ENCODE measurements at regions of chr1 and their contacts with region 1.

Region 1: DNA sequence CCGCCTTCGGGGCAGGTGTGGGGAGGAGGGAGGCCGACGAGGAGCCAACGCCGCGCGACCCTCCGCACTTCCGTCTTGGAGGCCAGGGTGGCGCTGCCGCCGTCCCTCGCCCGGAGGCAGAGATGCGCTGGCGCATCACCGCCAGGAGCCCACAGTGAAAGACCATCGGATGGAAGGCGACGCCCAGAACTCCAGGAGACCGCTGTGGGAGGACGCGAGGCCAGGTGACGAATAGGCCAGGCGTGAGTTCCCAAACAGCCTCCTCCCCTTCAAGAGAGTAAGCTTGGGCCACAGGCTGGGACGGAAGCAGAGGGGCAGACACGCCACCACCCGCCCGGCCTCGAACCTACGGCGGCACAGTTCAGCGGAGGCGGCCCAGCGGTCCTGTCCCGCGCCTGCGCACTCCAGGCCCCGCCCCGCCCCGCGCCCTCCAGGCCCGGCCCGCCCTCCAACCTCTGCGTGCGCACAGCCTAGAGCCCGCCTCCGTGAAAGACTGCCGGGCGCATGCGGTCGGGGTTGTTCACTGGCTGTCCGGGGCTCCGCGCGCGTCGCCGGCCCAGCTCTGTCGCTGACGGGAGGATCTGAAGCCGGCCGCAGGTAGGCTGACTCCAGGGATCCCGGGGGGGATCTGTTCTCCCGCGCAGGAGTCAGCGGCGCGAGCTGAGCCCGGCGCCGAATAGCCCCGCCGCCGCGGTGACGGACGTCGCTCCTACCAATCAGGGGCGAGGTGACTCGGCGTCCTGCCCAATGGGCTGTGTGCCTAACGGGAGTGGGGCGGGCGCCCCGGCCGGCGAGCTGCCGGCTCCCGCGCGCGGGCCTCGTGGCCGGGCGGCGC is at the start of gene CTPS1:
- DNase-seq: peak; percentile 97
- H3K4me3 Mint-ChIP-seq: peak within 1 kb of the TSS; percentile 81
- H3K27ac Mint-ChIP-seq: peak within 1 kb of the TSS; percentile 89
- H3K4me1 Mint-ChIP-seq: peaks cover 43% of the 10 kb centered on the region
- H3K27me3 Mint-ChIP-seq: no peaks in the 10 kb centered on the region
- total RNA-seq, gene CTPS1: 78.0 to 78.5 TPM

Region 2: GRCh38 chr1:41003640-41004220 is 24.3 kb after region 1 on chr1:
- CTCF ChIA-PET with region 1: interaction called, 25 read pairs
- POLR2A ChIA-PET with region 1: interaction called, 14 read pairs
- intact Hi-C with region 1: loop called (anchors 1 kb)
- DNase-seq: peak; percentile 94
- H3K4me3 Mint-ChIP-seq: no peak overlapping the region
- H3K27ac Mint-ChIP-seq: no peak overlapping the region
- H3K4me1 Mint-ChIP-seq: peaks cover 24% of the 10 kb centered on the region
- H3K27me3 Mint-ChIP-seq: no peaks in the 10 kb centered on the region

Region 3: DNA sequence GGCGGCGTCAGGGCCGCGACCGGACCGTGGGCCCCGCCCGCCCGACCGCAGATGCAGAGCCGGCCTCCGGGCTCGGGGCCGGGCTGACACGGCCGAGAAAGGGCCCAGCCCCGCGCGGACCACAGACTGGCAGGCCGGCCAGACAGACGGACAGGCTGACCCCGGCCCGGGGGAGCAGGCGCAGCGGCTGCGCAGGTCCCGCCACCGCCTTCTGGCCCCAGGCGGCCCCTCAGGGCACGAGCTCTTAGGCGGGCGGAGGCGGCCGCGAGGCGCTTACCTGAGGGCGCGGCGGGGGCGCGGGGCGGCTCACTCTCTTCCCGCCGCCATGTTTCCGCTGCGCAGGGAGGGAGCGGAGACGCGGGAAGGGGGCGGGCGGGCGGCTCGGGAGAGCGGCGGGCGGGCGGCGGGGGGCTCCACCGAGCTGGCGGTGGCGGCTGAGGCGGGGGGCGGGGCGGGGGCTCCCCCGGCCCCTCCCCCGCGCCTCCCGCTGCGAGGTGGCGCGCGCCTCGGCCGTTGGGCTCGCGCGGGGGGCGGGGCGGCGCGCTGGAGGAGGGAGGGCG is 262.4 kb after region 1 on chr1 and contains the start of gene SCMH1:
- CTCF ChIA-PET with region 1: interaction called, 3 read pairs
- POLR2A ChIA-PET with region 1: interaction called, 3 read pairs
- intact Hi-C with region 1: loop called (anchors 5 kb)
- DNase-seq: peak; percentile 65
- H3K4me3 Mint-ChIP-seq: peak within 1 kb of the TSS; percentile 77
- H3K27ac Mint-ChIP-seq: peak within 1 kb of the TSS; percentile 73
- H3K4me1 Mint-ChIP-seq: peaks cover 11% of the 10 kb centered on the region
- H3K27me3 Mint-ChIP-seq: no peaks in the 10 kb centered on the region
- total RNA-seq, gene SCMH1: 17.7 to 20.7 TPM

Region 4: GRCh38 chr1:41360993-41361753 is 381.7 kb after region 1 on chr1 and contains the start of gene FOXO6:
- CTCF ChIA-PET with region 1: no interaction called
- POLR2A ChIA-PET with region 1: no interaction called
- intact Hi-C with region 1: loop called (anchors 10 kb)
- DNase-seq: peak; percentile 95
- H3K4me3 Mint-ChIP-seq: peak within 1 kb of the TSS; percentile 56
- H3K27ac Mint-ChIP-seq: no peak within 1 kb of the TSS
- H3K4me1 Mint-ChIP-seq: peaks cover 4% of the 10 kb centered on the region
- H3K27me3 Mint-ChIP-seq: peaks cover 19% of the 10 kb centered on the region
- total RNA-seq, gene FOXO6: 0.19 TPM

Measured in activated CD4-positive, alpha-beta memory T cell treated with anti-CD3 and anti-CD28 coated beads for 36 hours (primary cell).